Right lobe of liver (tissue), 6 donors: ENCODE measurements at regions of chr15 and their contacts with region 1.

Region 1: GRCh38 chr15:55221090-55222011 is 24.6 kb upstream of the RSL24D1 start:
- DNase-seq: no peak
- ATAC-seq: peak; percentile 35 to 70 (median 60)
- H3K4me3 ChIP-seq: no peak overlapping the region
- H3K27ac ChIP-seq: peak overlapping the region in 2 of 3 donors; percentile 52 to 61
- H3K4me1 ChIP-seq: peaks cover 0 to 24% (median 2%) of the 10 kb centered on the region in 4 donors
- H3K27me3 ChIP-seq: no peaks in the 10 kb centered on the region
- CTCF ChIP-seq: no peak
- POLR2A ChIP-seq: no peak

Region 2: GRCh38 chr15:55289721-55290527 is 68.6 kb after region 1 on chr15 and contains the start of gene RAB27A:
- intact Hi-C with region 1: loop called in 1 of 2 experiments (anchors 5 kb)
- DNase-seq: peak; percentile 88 to 92 (median 88)
- ATAC-seq: peak; percentile 83 to 91 (median 88)
- H3K4me3 ChIP-seq: peak within 1 kb of the TSS; percentile 85 to 92 (median 85)
- H3K27ac ChIP-seq: peak within 1 kb of the TSS; percentile 77 to 95 (median 93)
- H3K4me1 ChIP-seq: peaks cover 0 to 16% (median 3%) of the 10 kb centered on the region in 4 donors
- H3K27me3 ChIP-seq: no peaks in the 10 kb centered on the region
- CTCF ChIP-seq: no peak
- POLR2A ChIP-seq: peak; percentile 71
- total RNA-seq, gene RAB27A: 15.9 to 41.4 (median 21.0) TPM

Region 3: GRCh38 chr15:55434989-55435825 is 213.9 kb after region 1 on chr15:
- intact Hi-C with region 1: loop called in 1 of 2 experiments (anchors 5 kb)
- DNase-seq: no peak
- ATAC-seq: peak; percentile 88 to 95 (median 90)
- H3K4me3 ChIP-seq: no peak overlapping the region
- H3K27ac ChIP-seq: no peak overlapping the region
- H3K4me1 ChIP-seq: no peaks in the 10 kb centered on the region
- H3K27me3 ChIP-seq: no peaks in the 10 kb centered on the region
- CTCF ChIP-seq: peak; percentile 55 to 62 (median 57)
- POLR2A ChIP-seq: no peak